ENCODE measurements at regions of chr5 and their contacts with region 1.

Region 1: DNA sequence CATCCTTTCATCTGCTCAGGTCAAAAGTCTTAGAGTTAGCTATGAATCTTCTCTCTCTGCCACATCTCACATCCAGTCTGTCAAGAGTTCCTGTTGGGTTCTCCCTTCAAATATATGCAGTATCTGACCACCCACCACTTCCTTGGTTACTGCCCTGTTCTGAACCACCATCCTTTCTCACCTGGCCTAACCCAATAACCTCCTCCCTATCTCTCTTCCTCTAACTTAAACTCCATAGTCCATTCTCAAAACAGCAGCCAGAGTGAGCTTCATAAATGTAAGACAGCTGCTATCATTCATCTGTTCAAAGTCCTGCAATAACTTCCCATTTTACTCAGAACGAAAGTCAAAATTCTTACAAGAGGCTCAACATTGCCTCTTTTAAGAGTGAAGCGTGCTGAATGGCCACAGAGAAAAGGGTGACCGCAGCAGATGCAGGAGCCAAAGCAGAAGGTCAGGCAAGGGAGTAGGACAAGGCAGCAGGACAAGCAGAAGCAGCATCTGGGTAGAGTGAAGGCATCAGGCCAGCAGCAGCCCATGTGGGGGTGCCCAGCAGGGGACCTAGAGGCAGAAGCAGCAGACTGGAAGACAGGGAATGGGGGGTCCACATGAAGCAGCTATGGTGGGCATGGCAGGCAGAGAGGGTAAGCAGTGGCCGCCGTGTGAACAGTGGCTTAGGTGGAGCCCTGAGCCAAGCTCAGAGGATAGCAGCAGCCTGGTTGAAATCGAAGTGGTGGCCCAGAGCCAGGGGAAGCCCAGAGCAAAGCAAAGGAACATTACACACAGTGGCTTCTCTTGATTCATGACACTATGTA is 39.3 kb upstream of the CDC42SE2 start:
- DNase-seq: peak; percentile 33
- ATAC-seq: peak; percentile 84
- H3K4me3 Mint-ChIP-seq: no peak overlapping the region
- H3K27ac Mint-ChIP-seq: no peak overlapping the region
- H3K4me1 Mint-ChIP-seq: peaks cover 27% of the 10 kb centered on the region
- H3K27me3 Mint-ChIP-seq: no peaks in the 10 kb centered on the region
- CTCF ChIP-seq: no peak

Region 2: GRCh38 chr5:131170540-131171275 is 53.9 kb before region 1 on chr5 and contains the start of gene LYRM7:
- CTCF ChIA-PET with region 1: no interaction called
- POLR2A ChIA-PET with region 1: interaction called, 5 read pairs
- intact Hi-C with region 1: loop called (anchors 1 kb)
- DNase-seq: peak; percentile 80
- ATAC-seq: peak; percentile 96
- H3K4me3 Mint-ChIP-seq: peak within 1 kb of the TSS; percentile 98
- H3K27ac Mint-ChIP-seq: peak within 1 kb of the TSS; percentile 93
- H3K4me1 Mint-ChIP-seq: peaks cover 42% of the 10 kb centered on the region
- H3K27me3 Mint-ChIP-seq: no peaks in the 10 kb centered on the region
- CTCF ChIP-seq: no peak
- total RNA-seq, gene LYRM7: 11.9 and 13.1 TPM in 2 replicates

Region 3: DNA sequence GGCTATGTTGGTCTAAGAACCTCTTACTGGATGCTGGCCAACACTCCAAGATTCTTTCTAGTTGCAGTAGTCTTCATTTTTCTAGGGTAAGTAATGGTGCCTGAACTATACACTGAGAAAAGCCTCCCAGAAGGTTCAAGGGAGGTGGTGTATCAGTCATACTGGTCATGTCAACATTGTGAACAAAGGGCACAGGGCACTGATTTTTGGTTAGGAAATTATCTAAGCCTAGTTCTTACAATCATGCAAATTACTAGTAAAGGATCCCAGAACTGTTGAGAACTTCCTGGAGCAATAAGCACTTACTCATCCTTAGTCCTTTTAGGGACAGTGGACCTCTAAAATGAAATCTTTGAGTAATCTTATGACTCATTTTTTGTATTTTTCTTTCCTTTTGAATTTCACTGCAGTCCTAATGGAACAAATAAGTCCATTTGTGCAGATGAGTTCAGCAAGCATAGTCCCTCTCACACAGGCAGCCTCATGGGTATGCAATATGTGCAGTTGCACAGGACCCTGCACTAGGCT is 18.2 kb after region 1 on chr5:
- CTCF ChIA-PET with region 1: no interaction called
- POLR2A ChIA-PET with region 1: interaction called, 5 read pairs
- intact Hi-C with region 1: loop called (anchors 2 kb)
- DNase-seq: no peak
- ATAC-seq: no peak
- H3K4me3 Mint-ChIP-seq: no peak overlapping the region
- H3K27ac Mint-ChIP-seq: no peak overlapping the region
- H3K4me1 Mint-ChIP-seq: peaks cover 11% of the 10 kb centered on the region
- H3K27me3 Mint-ChIP-seq: no peaks in the 10 kb centered on the region
- CTCF ChIP-seq: no peak

Measured in activated B cell treated with CpG ODN at 0.5 μM for 24 hours (primary cell).